K562 (cell line): ENCODE measurements at regions of chr5 and their contacts with region 1.

Region 1: DNA sequence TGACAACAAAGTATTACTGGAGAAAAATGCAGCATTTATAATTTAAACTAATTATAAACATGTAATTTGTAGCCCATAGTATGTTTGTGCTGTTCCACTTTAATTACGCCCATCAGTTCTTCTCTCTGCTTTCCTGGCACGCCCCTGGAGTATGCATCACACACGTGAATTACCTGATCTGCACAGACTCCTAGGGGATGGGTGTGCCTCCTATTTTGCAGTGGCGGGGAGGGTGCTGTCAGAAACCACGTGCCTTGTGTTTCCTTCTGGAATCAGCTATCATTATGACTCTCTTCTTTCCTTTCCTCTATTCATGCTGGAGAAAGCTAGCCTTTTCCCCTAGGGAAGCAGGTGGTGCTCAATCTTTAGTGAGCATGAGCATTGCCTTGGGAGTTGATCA is 43.3 kb downstream of the RPS23 start:
- DNase-seq: no peak
- ATAC-seq: peak; percentile 33; the same call in 1 of the 3 replicates
- H3K4me3 ChIP-seq: no peak overlapping the region
- H3K27ac ChIP-seq: no peak overlapping the region
- H3K4me1 ChIP-seq: no peaks in the 10 kb centered on the region
- H3K27me3 ChIP-seq: no peaks in the 10 kb centered on the region
- CTCF ChIP-seq: no peak
- EP300 ChIP-seq: no peak
- POLR2A ChIP-seq: no peak
- RAD21 ChIP-seq: no peak

Region 2: GRCh38 chr5:82174128-82174918 is 60.6 kb before region 1 on chr5:
- CTCF ChIA-PET with region 1: no interaction called
- POLR2A ChIA-PET with region 1: no interaction called
- in situ Hi-C with region 1: loop called (anchors 5 kb)
- intact Hi-C with region 1: no loop called
- DNase-seq: peak; percentile 58 to 86 (median 66)
- ATAC-seq: peak; percentile 99
- H3K4me3 ChIP-seq: no peak overlapping the region
- H3K27ac ChIP-seq: no peak overlapping the region
- H3K4me1 ChIP-seq: no peaks in the 10 kb centered on the region; a peak in 1 of 5 replicates
- H3K27me3 ChIP-seq: no peaks in the 10 kb centered on the region
- CTCF ChIP-seq: peak; percentile 69 to 83 (median 81)
- EP300 ChIP-seq: no peak
- POLR2A ChIP-seq: no peak
- RAD21 ChIP-seq: peak; percentile 50 to 73

Region 3: GRCh38 chr5:82375531-82376244 is 140.8 kb after region 1 on chr5:
- CTCF ChIA-PET with region 1: no interaction called
- POLR2A ChIA-PET with region 1: no interaction called
- in situ Hi-C with region 1: no loop called
- intact Hi-C with region 1: no loop called
- DNase-seq: no peak
- ATAC-seq: peak; percentile 34; the same call in 1 of the 3 replicates
- H3K4me3 ChIP-seq: no peak overlapping the region
- H3K27ac ChIP-seq: no peak overlapping the region
- H3K4me1 ChIP-seq: no peaks in the 10 kb centered on the region
- H3K27me3 ChIP-seq: no peaks in the 10 kb centered on the region
- CTCF ChIP-seq: no peak
- EP300 ChIP-seq: no peak
- POLR2A ChIP-seq: no peak
- RAD21 ChIP-seq: no peak